GM10248 (cell line): ENCODE measurements at regions of chr16 and their contacts with region 1.

Region 1: DNA sequence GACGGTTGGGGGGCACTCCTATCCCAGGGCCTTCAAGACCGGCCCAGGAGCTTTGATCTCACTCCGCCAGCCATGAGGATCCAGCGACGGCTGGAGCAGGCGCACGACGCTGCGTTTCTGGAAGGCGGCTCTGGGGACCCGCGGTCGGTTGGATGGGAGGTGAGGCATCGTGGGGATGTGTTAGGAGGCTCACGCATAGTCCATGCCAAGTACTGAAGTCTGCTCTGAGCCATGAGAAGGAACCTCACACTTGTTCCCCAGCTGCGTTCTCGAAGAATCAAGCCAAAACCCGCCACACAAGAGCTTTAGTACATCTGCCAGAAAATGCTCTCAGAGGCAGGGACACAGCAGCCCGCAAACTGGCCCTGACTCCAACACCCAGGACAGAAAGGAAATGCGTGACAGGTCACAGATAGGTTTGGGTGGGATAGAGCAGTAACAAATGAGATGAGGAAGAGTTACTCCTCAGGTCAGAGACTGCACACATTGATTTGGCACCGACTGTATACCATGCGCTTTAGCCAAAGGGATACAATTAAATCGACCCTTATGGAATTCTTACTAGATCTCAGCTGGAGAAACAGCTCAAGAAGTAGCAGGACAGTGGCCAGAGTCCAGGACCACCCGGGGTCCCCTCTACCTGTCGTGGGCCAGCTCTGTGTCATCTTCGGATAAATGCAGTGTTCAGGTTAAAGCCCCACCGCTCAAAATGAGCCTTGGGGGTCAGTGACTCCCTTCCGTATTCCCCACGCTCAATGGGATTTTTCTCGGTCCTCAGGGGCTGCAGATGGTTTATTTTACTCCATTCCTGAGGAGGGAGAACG is 6.7 kb upstream of the GSG1L start:
- DNase-seq: no peak
- CTCF ChIP-seq: no peak

Region 2: DNA sequence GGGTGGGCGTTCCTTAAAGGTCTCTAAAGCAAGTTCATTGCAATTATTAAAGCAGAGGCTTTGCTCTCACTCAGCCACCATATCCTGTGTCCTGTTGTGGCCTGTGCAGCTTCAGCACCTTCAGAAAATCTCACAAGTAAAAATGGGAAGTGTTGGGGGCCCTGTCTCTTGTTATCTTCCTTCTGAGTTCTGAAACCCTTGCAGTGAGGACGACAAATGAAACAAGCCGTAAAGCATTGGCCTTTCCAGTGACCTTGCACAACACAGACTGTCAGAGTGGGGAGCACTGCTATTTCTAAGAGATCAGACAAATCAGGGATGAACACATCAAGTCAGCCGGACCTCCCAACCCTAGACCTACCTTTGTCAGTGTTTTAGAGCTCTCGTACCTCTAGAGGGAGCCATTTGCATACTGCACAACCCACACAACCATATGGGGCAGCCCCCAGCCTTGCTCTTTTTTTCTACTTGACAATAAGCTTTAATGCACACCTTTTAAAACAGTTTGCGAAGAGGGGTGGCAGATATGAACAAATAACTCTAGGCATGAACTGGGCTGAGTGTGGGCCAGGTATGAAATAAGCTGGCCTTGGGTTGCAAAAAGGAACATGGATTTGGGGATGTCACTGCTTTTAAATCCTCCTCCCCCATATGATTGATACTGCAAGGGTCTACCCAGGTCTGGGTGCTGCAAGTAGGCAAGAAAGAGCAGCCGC is 430.5 kb before region 1 on chr16:
- CTCF ChIA-PET with region 1: interaction called, 32 read pairs
- POLR2A ChIA-PET with region 1: no interaction called
- DNase-seq: peak; percentile 84
- CTCF ChIP-seq: peak; percentile 76

Region 3: GRCh38 chr16:27690608-27691007 is 379.6 kb before region 1 on chr16:
- CTCF ChIA-PET with region 1: interaction called, 17 read pairs
- POLR2A ChIA-PET with region 1: no interaction called
- DNase-seq: peak; percentile 36
- CTCF ChIP-seq: peak; percentile 45

Region 4: GRCh38 chr16:27972500-27972899 is 97.7 kb before region 1 on chr16:
- CTCF ChIA-PET with region 1: interaction called, 16 read pairs
- POLR2A ChIA-PET with region 1: no interaction called
- DNase-seq: peak; percentile 72
- CTCF ChIP-seq: peak; percentile 75

Region 5: DNA sequence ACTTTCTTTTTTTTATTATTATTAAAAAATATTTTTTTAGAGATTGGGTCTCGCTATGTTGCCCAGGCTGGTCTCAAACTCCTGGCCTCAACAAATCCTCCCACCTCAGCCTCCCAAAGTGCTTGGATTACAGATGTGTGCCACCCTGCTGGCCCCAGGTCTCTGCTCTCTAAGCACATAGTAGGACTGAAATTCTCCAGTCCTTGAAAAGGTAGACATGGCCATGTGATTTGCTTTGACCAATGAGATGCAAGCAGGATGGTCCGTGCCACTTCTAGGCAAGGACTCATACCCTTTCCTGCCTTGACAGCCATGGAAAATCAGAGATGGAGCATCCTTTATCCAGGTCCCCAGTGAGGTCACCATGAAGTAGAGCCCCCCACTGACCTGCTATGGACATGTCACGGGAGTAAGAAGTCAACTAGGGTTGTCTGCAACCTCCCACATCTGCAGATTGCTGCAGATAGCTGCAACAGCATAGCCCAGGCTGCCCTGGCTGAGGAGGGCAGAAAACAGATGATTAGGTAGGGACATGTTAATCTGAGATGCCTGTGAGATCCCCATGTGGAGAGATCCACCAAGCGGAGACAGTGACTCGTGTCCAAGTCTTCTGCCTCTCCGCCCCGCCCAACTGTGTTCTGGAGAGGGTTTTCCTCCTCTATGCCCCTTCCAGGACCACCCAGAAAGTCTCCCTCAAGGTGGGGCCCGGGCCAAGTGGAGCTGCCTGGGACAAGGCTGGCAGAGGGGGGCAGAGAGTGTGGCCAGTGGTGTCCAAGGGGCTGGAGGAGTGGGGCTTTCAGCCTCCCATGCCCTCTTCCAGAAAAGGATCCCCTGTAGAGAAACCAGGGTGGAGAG is 17.7 kb before region 1 on chr16:
- CTCF ChIA-PET with region 1: interaction called, 19 read pairs
- POLR2A ChIA-PET with region 1: no interaction called
- DNase-seq: no peak
- CTCF ChIP-seq: no peak

Region 6: GRCh38 chr16:28081391-28081968 is 11.3 kb after region 1 on chr16:
- CTCF ChIA-PET with region 1: interaction called, 29 read pairs
- POLR2A ChIA-PET with region 1: no interaction called
- DNase-seq: no peak
- CTCF ChIP-seq: no peak